ENCODE measurements at regions of chr11 and their contacts with region 1.

Region 1: GRCh38 chr11:120511116-120511819 is at the start of gene GRIK4:
- DNase-seq: peak; percentile 81
- ATAC-seq: peak; percentile 94
- H3K4me3 Mint-ChIP-seq: peak within 1 kb of the TSS; percentile 58
- H3K27ac Mint-ChIP-seq: no peak within 1 kb of the TSS
- H3K4me1 Mint-ChIP-seq: peaks cover 3% of the 10 kb centered on the region
- H3K27me3 Mint-ChIP-seq: peaks cover 51% of the 10 kb centered on the region
- CTCF ChIP-seq: peak; percentile 20
- total RNA-seq, gene GRIK4: 0.05 TPM in 1 of 2 replicates, not detected in the other

Region 2: DNA sequence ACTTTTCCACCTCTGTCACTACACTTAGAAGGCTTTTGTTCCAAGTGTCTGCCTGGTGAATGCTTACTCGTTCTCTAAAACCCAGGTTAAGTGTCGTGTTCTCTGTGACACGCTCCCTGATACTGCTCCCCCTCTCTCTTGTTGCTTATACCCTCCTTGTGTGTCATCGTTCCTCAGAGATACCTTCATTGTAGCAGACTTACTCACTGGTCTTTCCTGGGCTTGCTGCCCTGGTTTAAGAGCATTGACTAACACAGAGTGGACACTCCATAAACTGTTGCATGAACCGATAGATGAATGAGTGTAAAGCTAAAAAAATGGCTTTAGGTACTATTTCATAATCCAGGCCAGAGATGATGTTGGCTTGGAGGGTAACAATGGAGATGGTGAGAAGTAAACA is 171.6 kb after region 1 on chr11:
- CTCF ChIA-PET with region 1: interaction called, 32 read pairs
- POLR2A ChIA-PET with region 1: no interaction called
- intact Hi-C with region 1: loop called (anchors 1 kb)
- DNase-seq: no peak
- ATAC-seq: no peak
- H3K4me3 Mint-ChIP-seq: no peak overlapping the region
- H3K27ac Mint-ChIP-seq: no peak overlapping the region
- H3K4me1 Mint-ChIP-seq: no peaks in the 10 kb centered on the region
- H3K27me3 Mint-ChIP-seq: peaks cover 9% of the 10 kb centered on the region
- CTCF ChIP-seq: no peak

Region 3: DNA sequence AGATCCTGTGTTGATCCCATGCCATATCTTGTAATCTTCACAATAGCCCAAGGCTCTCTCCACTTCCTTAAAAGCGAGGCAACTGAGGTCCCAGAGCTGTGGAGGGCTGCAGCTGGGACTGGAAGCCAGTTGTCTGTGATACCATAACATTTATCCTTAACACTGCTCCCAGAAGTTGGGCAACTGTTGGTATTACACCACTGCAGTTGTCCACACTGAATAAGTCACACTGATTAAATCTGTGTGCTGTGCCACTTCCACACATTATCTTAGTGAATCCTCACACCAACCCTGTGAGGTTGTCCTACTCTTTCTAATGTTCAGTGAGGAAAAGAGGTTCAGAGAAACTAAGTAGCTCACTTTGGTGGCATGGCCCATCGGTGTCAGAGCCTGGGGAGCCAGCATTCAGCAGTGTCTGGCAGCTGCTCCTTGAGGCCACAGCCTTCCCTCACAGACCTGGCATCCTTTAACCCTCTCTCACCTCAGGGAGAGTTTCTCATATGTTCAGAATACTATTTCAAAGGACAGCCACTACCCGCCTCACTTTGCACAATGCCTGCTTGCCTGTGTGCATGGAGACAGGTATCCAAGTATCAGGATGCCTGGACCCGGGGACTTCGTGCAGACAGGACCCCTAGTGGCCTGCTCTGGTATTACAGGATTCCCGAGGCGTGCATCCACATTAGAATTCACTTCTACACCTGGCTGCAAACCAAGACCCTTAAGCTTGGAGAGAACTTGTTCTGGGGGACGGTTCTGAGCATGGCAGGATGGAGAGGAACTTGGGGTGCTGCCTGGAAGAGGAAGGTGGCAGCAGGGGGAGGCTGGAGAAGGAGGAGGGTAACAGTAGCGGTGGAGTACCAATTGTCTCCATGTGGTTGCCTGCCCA is 290.8 kb after region 1 on chr11:
- CTCF ChIA-PET with region 1: interaction called, 3 read pairs
- POLR2A ChIA-PET with region 1: no interaction called
- intact Hi-C with region 1: loop called (anchors 1 kb)
- DNase-seq: peak; percentile 34
- ATAC-seq: peak; percentile 45
- H3K4me3 Mint-ChIP-seq: no peak overlapping the region
- H3K27ac Mint-ChIP-seq: no peak overlapping the region
- H3K4me1 Mint-ChIP-seq: no peaks in the 10 kb centered on the region
- H3K27me3 Mint-ChIP-seq: peaks cover 19% of the 10 kb centered on the region
- CTCF ChIP-seq: peak; percentile 23

Region 4: DNA sequence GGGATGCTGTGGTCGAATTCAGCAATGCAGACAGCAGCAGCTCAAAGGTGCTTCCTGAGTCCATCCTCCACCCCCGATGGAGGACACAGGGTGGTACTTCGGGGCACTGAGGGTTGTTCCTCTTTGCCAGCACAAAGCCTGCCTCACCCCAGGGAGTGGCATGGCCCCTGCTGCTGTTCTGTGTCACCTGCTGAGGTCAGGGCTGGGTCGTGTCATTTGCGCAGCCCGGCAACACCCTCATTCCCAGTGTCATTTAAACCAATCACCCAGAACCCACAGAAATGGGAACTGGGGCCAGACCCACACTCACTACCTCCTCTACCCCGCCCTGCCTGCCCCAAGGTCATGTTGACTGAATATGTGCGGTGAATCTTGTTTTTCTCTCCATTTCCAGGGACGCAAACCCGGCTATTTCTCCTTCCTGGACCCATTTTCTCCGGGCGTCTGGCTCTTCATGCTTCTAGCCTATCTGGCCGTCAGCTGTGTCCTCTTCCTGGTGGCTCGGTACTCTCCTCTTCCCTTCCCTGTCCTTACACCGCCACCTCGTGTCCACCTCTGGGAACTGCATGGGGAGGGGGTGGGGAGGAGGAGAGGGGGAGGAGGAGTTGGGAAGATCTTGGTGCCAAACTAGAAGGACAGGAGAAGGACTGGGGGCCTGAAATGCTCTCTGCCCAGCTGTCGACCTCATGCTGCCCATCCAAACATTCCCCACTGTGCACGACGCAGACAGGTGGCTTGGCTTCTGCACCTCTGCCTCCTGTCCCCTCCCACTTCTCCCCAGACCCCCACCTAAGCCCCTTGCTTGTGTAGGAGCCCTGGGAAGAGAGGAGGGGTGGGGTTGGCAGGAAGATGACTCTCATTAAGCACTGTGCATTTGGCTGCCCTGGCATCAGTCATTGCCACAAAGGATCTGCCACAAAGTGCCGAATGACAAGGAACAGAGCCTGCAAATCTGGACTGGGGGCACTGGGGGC is 441.5 kb after region 1 on chr11:
- CTCF ChIA-PET with region 1: interaction called, 3 read pairs
- POLR2A ChIA-PET with region 1: no interaction called
- intact Hi-C with region 1: loop called (anchors 1 kb)
- DNase-seq: peak; percentile 26
- ATAC-seq: peak; percentile 75
- H3K4me3 Mint-ChIP-seq: peak overlapping the region; percentile 45
- H3K27ac Mint-ChIP-seq: no peak overlapping the region
- H3K4me1 Mint-ChIP-seq: peaks cover 12% of the 10 kb centered on the region
- H3K27me3 Mint-ChIP-seq: peaks cover 26% of the 10 kb centered on the region
- CTCF ChIP-seq: no peak

Region 5: DNA sequence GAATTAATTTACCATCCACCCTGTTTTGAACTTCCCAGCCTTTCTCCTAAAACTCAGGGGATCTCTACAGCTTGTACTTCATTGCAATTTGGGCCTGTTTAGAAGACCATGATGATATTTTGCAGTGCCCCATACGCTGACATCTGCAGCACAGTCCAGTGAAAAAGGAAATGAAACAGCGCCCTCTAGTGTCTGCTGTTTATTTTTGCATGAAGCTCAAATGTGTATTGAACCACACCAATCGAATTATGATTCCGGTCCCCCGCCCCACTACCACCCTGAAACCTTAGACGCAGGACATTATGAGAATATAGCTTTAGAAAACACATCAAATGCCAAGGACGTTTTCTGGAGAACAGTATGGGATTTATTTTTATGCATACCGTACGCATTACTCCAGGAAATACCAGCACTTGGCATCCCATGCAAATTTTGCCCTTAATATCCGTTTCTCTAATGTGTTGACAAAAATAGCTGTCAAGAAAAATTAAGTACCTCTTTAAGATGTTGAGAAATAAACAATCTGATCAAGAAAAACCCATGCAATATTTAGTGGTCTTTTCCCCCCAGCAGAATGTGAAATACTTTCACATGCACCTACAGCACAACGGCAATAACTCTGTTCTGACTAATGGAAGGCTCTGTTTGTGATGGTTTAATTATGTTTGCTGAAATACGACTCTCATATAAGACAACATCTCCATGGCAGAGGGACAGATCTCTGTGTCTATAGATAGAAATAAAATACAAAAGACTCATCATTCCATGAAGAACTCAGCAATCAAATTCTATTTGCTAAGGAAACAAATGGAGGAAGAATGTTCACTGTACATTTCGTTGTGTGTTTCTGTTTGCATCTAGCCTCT is 683.7 kb after region 1 on chr11:
- CTCF ChIA-PET with region 1: interaction called, 4 read pairs
- POLR2A ChIA-PET with region 1: no interaction called
- intact Hi-C with region 1: loop called (anchors 1 kb)
- DNase-seq: no peak
- ATAC-seq: peak; percentile 52
- H3K4me3 Mint-ChIP-seq: no peak overlapping the region
- H3K27ac Mint-ChIP-seq: no peak overlapping the region
- H3K4me1 Mint-ChIP-seq: peaks cover 6% of the 10 kb centered on the region
- H3K27me3 Mint-ChIP-seq: peaks cover 25% of the 10 kb centered on the region
- CTCF ChIP-seq: no peak

Measured in activated B cell treated with CpG ODN at 0.5 μM for 24 hours (primary cell).